CD4-positive, alpha-beta T cell (primary cell): ENCODE measurements at regions of chr6 and their contacts with region 1.

Region 1: GRCh38 chr6:26270903-26271667 is 93.9 kb upstream of the BTN3A2 start:
- DNase-seq: peak; percentile 60 to 92 (median 75)
- ATAC-seq: peak; percentile 25
- H3K4me3 ChIP-seq: peak overlapping the region; percentile 59
- H3K4me3 Mint-ChIP-seq: no peak overlapping the region
- H3K27ac ChIP-seq: peak overlapping the region; percentile 82 to 84
- H3K27ac Mint-ChIP-seq: no peak overlapping the region
- H3K4me1 ChIP-seq: peaks cover 28% of the 10 kb centered on the region
- H3K4me1 Mint-ChIP-seq: peaks cover 7% of the 10 kb centered on the region
- H3K27me3 ChIP-seq: no peaks in the 10 kb centered on the region
- H3K27me3 Mint-ChIP-seq: no peaks in the 10 kb centered on the region
- CTCF ChIP-seq: no peak

Region 2: GRCh38 chr6:24600903-24601302 is 1670.2 kb before region 1 on chr6:
- CTCF ChIA-PET with region 1: no interaction called
- POLR2A ChIA-PET with region 1: no interaction called
- intact Hi-C with region 1: no loop called
- DNase-seq: no peak
- ATAC-seq: no peak
- H3K4me3 ChIP-seq: no peak overlapping the region
- H3K4me3 Mint-ChIP-seq: no peak overlapping the region
- H3K27ac ChIP-seq: no peak overlapping the region
- H3K27ac Mint-ChIP-seq: no peak overlapping the region
- H3K4me1 ChIP-seq: no peaks in the 10 kb centered on the region
- H3K4me1 Mint-ChIP-seq: no peaks in the 10 kb centered on the region
- H3K27me3 ChIP-seq: no peaks in the 10 kb centered on the region
- H3K27me3 Mint-ChIP-seq: no peaks in the 10 kb centered on the region
- CTCF ChIP-seq: no peak

Region 3: DNA sequence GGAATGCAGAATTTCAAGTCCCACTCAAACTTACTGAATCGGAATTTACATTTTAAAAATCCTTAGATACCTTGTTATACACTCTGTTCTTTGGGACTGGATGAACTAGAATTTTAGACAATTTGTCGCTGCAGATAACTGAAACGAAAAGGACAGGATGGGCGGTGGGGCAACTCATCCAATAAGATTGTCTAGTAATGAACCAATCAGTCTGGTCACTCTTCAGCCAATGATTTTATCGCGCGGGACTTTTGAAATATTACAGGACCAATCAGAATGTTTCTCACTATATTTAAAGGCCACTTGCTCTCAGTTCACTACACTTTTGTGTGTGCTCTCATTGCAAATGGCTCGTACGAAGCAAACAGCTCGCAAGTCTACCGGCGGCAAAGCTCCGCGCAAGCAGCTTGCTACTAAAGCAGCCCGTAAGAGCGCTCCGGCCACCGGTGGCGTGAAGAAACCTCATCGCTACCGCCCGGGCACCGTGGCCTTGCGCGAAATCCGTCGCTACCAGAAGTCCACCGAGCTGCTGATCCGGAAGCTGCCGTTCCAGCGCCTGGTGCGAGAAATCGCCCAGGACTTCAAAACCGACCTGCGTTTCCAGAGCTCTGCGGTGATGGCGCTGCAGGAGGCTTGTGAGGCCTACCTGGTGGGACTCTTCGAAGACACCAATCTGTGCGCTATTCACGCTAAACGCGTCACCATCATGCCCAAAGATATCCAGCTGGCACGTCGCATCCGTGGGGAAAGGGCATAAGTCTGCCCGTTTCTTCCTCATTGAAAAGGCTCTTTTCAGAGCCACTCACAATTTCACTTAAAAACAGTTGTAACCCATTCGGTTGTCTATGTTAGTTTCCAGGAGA is 225.8 kb before region 1 on chr6:
- CTCF ChIA-PET with region 1: no interaction called
- POLR2A ChIA-PET with region 1: interaction called, 41 read pairs
- intact Hi-C with region 1: no loop called
- DNase-seq: peak; percentile 49 to 96 (median 74)
- ATAC-seq: peak; percentile 55
- H3K4me3 ChIP-seq: peak overlapping the region; percentile 70
- H3K4me3 Mint-ChIP-seq: peak overlapping the region; percentile 97
- H3K27ac ChIP-seq: peak overlapping the region; percentile 71 to 91
- H3K27ac Mint-ChIP-seq: peak overlapping the region; percentile 94
- H3K4me1 ChIP-seq: peaks cover 21% of the 10 kb centered on the region
- H3K4me1 Mint-ChIP-seq: peaks cover 28% of the 10 kb centered on the region
- H3K27me3 ChIP-seq: no peaks in the 10 kb centered on the region
- H3K27me3 Mint-ChIP-seq: no peaks in the 10 kb centered on the region
- CTCF ChIP-seq: no peak

Region 4: GRCh38 chr6:26183581-26184366 is 87.3 kb before region 1 on chr6:
- CTCF ChIA-PET with region 1: interaction called, 8 read pairs
- POLR2A ChIA-PET with region 1: interaction called, 70 read pairs
- intact Hi-C with region 1: no loop called
- DNase-seq: peak in 13 of 14 experiments; percentile 20 to 94 (median 48)
- ATAC-seq: peak; percentile 89
- H3K4me3 ChIP-seq: peak overlapping the region; percentile 62
- H3K4me3 Mint-ChIP-seq: peak overlapping the region; percentile 99
- H3K27ac ChIP-seq: peak overlapping the region; percentile 43 to 72
- H3K27ac Mint-ChIP-seq: peak overlapping the region; percentile 86
- H3K4me1 ChIP-seq: peaks cover 34% of the 10 kb centered on the region
- H3K4me1 Mint-ChIP-seq: peaks cover 42% of the 10 kb centered on the region
- H3K27me3 ChIP-seq: no peaks in the 10 kb centered on the region
- H3K27me3 Mint-ChIP-seq: no peaks in the 10 kb centered on the region
- CTCF ChIP-seq: no peak

Region 5: DNA sequence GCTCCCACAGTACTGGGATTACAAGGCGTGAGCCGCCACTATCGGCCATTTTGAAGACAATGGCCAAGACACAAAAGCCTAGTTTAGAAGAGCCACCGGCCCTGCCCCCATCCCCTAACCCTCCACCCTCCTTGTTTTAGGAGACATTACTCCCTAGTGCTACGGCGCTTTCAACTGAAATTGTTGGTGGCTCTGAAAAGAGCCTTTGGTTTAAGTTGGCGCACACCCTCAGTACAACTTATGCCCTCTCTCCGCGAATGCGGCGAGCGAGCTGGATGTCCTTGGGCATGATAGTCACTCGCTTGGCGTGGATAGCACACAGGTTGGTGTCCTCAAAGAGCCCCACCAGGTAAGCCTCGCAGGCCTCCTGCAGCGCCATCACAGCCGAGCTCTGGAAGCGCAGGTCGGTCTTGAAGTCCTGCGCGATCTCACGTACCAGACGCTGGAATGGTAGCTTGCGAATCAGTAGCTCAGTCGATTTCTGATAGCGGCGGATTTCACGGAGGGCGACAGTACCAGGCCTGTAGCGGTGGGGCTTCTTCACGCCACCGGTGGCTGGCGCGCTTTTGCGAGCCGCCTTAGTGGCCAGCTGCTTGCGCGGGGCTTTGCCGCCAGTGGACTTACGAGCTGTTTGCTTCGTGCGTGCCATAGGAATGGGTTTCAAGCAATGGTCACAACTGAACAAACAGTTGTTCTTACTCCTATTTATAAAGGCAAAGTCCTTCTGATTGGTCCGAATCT is 21.0 kb before region 1 on chr6:
- CTCF ChIA-PET with region 1: interaction called, 10 read pairs
- POLR2A ChIA-PET with region 1: interaction called, 4 read pairs
- intact Hi-C with region 1: loop called in 1 of 2 experiments (anchors 1 kb)
- DNase-seq: peak; percentile 64 to 93 (median 74)
- ATAC-seq: peak; percentile 78
- H3K4me3 ChIP-seq: peak overlapping the region; percentile 75
- H3K4me3 Mint-ChIP-seq: peak overlapping the region; percentile 97
- H3K27ac ChIP-seq: peak overlapping the region; percentile 72 to 80
- H3K27ac Mint-ChIP-seq: peak overlapping the region; percentile 88
- H3K4me1 ChIP-seq: peaks cover 29% of the 10 kb centered on the region
- H3K4me1 Mint-ChIP-seq: peaks cover 44% of the 10 kb centered on the region
- H3K27me3 ChIP-seq: no peaks in the 10 kb centered on the region
- H3K27me3 Mint-ChIP-seq: no peaks in the 10 kb centered on the region
- CTCF ChIP-seq: no peak

Region 6: GRCh38 chr6:26312501-26313390 is 41.7 kb after region 1 on chr6:
- CTCF ChIA-PET with region 1: interaction called, 3 read pairs
- POLR2A ChIA-PET with region 1: interaction called, 27 read pairs
- intact Hi-C with region 1: loop called in 1 of 2 experiments (anchors 2 kb)
- DNase-seq: peak; percentile 73 to 92 (median 82)
- ATAC-seq: peak; percentile 54
- H3K4me3 ChIP-seq: peak overlapping the region; percentile 69
- H3K4me3 Mint-ChIP-seq: peak overlapping the region; percentile 92
- H3K27ac ChIP-seq: peak overlapping the region in 1 of 2 donors; percentile 24
- H3K27ac Mint-ChIP-seq: peak overlapping the region; percentile 93
- H3K4me1 ChIP-seq: peaks cover 7% of the 10 kb centered on the region
- H3K4me1 Mint-ChIP-seq: peaks cover 44% of the 10 kb centered on the region
- H3K27me3 ChIP-seq: no peaks in the 10 kb centered on the region
- H3K27me3 Mint-ChIP-seq: peaks cover 30% of the 10 kb centered on the region
- CTCF ChIP-seq: no peak

Region 7: GRCh38 chr6:27132532-27133280 is 861.6 kb after region 1 on chr6:
- CTCF ChIA-PET with region 1: no interaction called
- POLR2A ChIA-PET with region 1: interaction called, 38 read pairs
- intact Hi-C with region 1: no loop called
- DNase-seq: peak; percentile 80 to 99 (median 88)
- ATAC-seq: peak; percentile 79
- H3K4me3 ChIP-seq: peak overlapping the region; percentile 75
- H3K4me3 Mint-ChIP-seq: no peak overlapping the region
- H3K27ac ChIP-seq: peak overlapping the region; percentile 79 to 81
- H3K27ac Mint-ChIP-seq: no peak overlapping the region
- H3K4me1 ChIP-seq: peaks cover 31% of the 10 kb centered on the region
- H3K4me1 Mint-ChIP-seq: peaks cover 12% of the 10 kb centered on the region
- H3K27me3 ChIP-seq: no peaks in the 10 kb centered on the region
- H3K27me3 Mint-ChIP-seq: no peaks in the 10 kb centered on the region
- CTCF ChIP-seq: no peak

Region 8: GRCh38 chr6:27871924-27872638 is 1601.0 kb after region 1 on chr6:
- CTCF ChIA-PET with region 1: no interaction called
- POLR2A ChIA-PET with region 1: interaction called, 13 read pairs
- intact Hi-C with region 1: no loop called
- DNase-seq: peak; percentile 71 to 97 (median 82)
- ATAC-seq: peak; percentile 75
- H3K4me3 ChIP-seq: peak overlapping the region; percentile 86
- H3K4me3 Mint-ChIP-seq: peak overlapping the region; percentile 93
- H3K27ac ChIP-seq: peak overlapping the region; percentile 89
- H3K27ac Mint-ChIP-seq: peak overlapping the region; percentile 93
- H3K4me1 ChIP-seq: peaks cover 39% of the 10 kb centered on the region
- H3K4me1 Mint-ChIP-seq: peaks cover 41% of the 10 kb centered on the region
- H3K27me3 ChIP-seq: no peaks in the 10 kb centered on the region
- H3K27me3 Mint-ChIP-seq: no peaks in the 10 kb centered on the region
- CTCF ChIP-seq: peak; percentile 43